RWPE1 (cell line): ENCODE measurements at regions of chr14 and their contacts with region 1.

Region 1: GRCh38 chr14:75088574-75089373 is 19.3 kb downstream of the ZC2HC1C start:
- DNase-seq: peak; percentile 54
- H3K27ac ChIP-seq: no peak overlapping the region
- CTCF ChIP-seq: peak; percentile 79

Region 2: DNA sequence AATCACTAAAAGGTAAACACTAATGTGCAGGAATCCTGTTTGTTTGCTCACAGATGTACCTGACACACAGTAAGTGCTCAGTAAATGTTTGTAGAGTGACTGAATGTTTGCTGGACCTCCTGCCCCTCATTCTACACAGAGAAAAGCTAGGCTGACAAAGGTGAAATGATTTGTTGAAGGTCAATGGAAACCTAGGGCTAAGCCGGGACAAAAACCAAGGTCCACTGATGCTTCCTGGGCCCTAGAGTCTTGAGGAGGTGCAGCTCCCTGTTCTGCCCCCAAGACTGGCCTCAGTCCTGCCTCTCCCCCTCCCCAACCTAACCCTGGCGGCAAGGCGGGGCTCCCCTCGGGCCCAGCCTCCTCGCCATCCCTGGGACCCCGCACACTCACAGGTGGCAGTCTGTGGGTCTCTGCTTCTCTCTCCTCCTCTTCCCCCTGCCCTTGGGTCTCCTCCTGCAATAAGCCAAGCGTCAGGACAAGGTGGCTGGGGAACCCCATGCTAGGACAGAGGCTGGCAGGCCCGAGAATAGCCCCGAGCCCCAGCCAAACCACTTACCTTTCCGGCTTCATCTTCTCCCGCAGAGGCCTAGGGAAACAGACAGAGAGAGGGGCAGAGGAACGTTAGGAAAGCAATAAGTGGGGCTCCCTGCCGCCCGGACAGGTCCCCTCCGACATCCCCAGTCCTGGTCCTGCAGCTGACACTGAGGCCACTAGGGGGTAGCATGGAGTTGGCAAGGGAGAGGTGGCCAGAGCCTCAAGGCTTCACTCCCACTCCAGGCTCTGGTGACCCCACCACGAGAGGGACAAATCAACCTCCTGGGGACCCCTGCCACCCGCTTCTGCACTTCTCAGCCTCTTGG is 142.7 kb before region 1 on chr14:
- CTCF ChIA-PET with region 1: interaction called, 25 read pairs
- POLR2A ChIA-PET with region 1: no interaction called
- DNase-seq: peak; percentile 72
- H3K27ac ChIP-seq: peak overlapping the region; percentile 74
- CTCF ChIP-seq: peak; percentile 89